ENCODE measurements at regions of chr3 and their contacts with region 1.

Region 1: GRCh38 chr3:39288300-39288808 is 8.5 kb upstream of the CX3CR1 start:
- DNase-seq: peak; percentile 60
- ATAC-seq: peak; percentile 94
- H3K4me3 ChIP-seq: no peak overlapping the region
- H3K27ac ChIP-seq: no peak overlapping the region
- H3K4me1 ChIP-seq: no peaks in the 10 kb centered on the region
- H3K27me3 ChIP-seq: no peaks in the 10 kb centered on the region
- CTCF ChIP-seq: peak; percentile 88

Region 2: GRCh38 chr3:39101022-39101689 is 187.2 kb before region 1 on chr3:
- CTCF ChIA-PET with region 1: no interaction called
- POLR2A ChIA-PET with region 1: no interaction called
- in situ Hi-C with region 1: no loop called
- intact Hi-C with region 1: loop called (anchors 5 kb)
- DNase-seq: no peak
- ATAC-seq: peak; percentile 83
- H3K4me3 ChIP-seq: no peak overlapping the region
- H3K27ac ChIP-seq: no peak overlapping the region
- H3K4me1 ChIP-seq: no peaks in the 10 kb centered on the region
- H3K27me3 ChIP-seq: no peaks in the 10 kb centered on the region
- CTCF ChIP-seq: peak; percentile 80

Region 3: DNA sequence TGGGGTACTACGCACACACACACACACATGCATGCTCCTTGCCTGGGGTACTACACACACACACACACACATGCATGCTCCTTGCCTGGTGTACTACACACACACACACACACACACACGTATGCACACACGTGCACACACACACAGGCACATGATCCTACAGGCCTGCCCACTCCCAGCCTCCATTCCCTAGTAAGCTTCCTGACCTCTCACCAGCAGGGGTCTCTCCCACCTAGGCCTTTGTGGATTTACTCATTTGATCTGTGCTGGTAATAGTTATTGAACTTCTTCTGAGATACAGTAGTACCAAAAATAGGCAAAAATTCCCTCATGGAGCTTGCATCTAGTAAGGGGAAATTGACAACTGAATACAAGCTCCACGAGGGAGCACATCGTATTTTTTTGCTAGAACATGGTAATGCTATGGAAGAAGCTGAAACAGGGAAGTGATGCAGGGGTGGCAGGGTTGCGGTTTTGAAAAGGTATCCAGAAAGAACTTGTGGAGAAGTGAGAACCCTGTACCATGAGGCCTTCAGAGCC is 161.8 kb before region 1 on chr3:
- CTCF ChIA-PET with region 1: interaction called, 9 read pairs
- POLR2A ChIA-PET with region 1: no interaction called
- in situ Hi-C with region 1: no loop called
- intact Hi-C with region 1: loop called (anchors 5 kb)
- DNase-seq: no peak
- ATAC-seq: peak; percentile 81; the same call in 1 of the 2 replicates
- H3K4me3 ChIP-seq: no peak overlapping the region
- H3K27ac ChIP-seq: no peak overlapping the region
- H3K4me1 ChIP-seq: peaks cover 10% of the 10 kb centered on the region; the same call in 1 of the 2 replicates
- H3K27me3 ChIP-seq: no peaks in the 10 kb centered on the region
- CTCF ChIP-seq: peak; percentile 65

Region 4: DNA sequence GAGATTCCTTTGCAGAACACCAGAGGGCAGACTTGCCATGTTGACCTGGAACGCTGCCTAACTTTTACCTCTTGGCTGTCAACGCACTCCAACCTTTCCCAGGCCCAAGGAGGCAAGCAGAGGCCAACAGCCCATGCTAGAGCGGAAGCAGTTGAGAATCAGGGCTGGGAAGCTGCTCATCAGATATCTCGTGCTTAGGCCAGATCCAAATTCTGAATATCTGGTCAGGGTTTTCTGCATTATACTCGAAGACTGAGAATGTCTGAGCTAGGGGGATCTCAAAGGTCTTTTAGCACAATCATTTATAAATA is 98.4 kb before region 1 on chr3:
- CTCF ChIA-PET with region 1: interaction called, 10 read pairs
- POLR2A ChIA-PET with region 1: no interaction called
- in situ Hi-C with region 1: no loop called
- intact Hi-C with region 1: loop called (anchors 1 kb)
- DNase-seq: no peak
- ATAC-seq: peak; percentile 83
- H3K4me3 ChIP-seq: no peak overlapping the region
- H3K27ac ChIP-seq: no peak overlapping the region
- H3K4me1 ChIP-seq: no peaks in the 10 kb centered on the region
- H3K27me3 ChIP-seq: no peaks in the 10 kb centered on the region
- CTCF ChIP-seq: peak; percentile 78

Region 5: DNA sequence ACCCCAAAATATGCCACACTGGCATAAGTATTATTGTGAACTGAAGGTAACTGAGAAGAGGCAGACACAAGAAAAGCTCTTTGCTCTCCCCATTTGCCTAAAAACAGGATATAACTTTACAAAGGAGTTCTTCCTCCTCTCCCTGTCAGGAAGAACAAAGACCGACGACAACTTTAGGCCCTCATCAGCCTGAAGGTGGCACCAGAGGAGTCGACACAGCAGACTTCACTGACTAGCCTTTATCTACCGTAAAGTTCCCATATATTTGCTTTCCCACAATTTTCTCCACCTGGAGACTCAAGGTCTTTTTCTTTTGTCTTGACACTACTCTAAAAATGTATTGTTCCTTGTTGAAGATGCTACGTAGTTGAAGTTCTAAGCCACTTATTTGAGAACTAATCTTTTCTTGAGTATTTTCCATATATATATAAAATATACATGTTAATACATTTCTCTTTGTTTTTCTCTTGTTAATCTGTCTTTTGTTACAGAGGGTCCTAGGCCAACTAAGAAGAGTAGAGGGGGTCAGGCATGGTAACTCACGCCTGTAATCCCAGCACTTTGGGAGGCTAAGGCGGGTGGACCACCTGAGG is 79.8 kb before region 1 on chr3:
- CTCF ChIA-PET with region 1: interaction called, 3 read pairs
- POLR2A ChIA-PET with region 1: no interaction called
- in situ Hi-C with region 1: no loop called
- intact Hi-C with region 1: loop called (anchors 5 kb)
- DNase-seq: peak; percentile 25
- ATAC-seq: peak; percentile 83; the same call in 1 of the 2 replicates
- H3K4me3 ChIP-seq: no peak overlapping the region
- H3K27ac ChIP-seq: no peak overlapping the region
- H3K4me1 ChIP-seq: no peaks in the 10 kb centered on the region
- H3K27me3 ChIP-seq: no peaks in the 10 kb centered on the region; the same call in 1 of the 2 replicates
- CTCF ChIP-seq: peak; percentile 72

Region 6: GRCh38 chr3:39378088-39378487 is 89.7 kb after region 1 on chr3:
- CTCF ChIA-PET with region 1: no interaction called
- POLR2A ChIA-PET with region 1: no interaction called
- in situ Hi-C with region 1: no loop called
- intact Hi-C with region 1: loop called (anchors 10 kb)
- DNase-seq: no peak
- ATAC-seq: peak; percentile 88; the same call in 1 of the 2 replicates
- H3K4me3 ChIP-seq: no peak overlapping the region
- H3K27ac ChIP-seq: no peak overlapping the region
- H3K4me1 ChIP-seq: peaks cover 6% of the 10 kb centered on the region; the same call in 1 of the 2 replicates
- H3K27me3 ChIP-seq: no peaks in the 10 kb centered on the region
- CTCF ChIP-seq: peak; percentile 80

Region 7: DNA sequence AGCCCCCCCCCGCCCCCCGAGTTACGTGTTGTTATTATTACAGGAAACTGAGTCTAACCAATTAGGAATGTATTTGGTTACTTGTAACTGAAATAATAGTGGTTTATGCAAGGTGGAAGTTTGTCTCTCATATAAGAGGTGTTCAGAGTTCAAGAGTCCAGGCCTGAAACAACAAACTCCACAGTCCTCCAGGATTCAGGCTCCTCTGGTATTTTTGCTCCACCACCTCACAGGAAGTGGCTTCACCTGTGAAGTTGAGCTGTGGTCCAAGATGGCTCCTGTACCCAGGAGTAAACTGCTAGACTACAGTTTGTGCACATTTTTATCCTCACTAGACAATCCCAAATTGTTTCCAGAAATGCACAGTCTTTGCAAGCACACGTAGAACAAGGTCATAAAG is 206.4 kb after region 1 on chr3:
- CTCF ChIA-PET with region 1: no interaction called
- POLR2A ChIA-PET with region 1: no interaction called
- in situ Hi-C with region 1: no loop called
- intact Hi-C with region 1: no loop called
- DNase-seq: no peak
- ATAC-seq: no peak
- H3K4me3 ChIP-seq: no peak overlapping the region
- H3K27ac ChIP-seq: no peak overlapping the region
- H3K4me1 ChIP-seq: no peaks in the 10 kb centered on the region
- H3K27me3 ChIP-seq: no peaks in the 10 kb centered on the region; the same call in 1 of the 2 replicates
- CTCF ChIP-seq: no peak

Measured in Panc1 (cell line).